Activated naive CD4-positive, alpha-beta T cell treated with anti-CD3 and anti-CD28 coated beads, Interleukin-2, amount 10 ng/mL, durations not matched to agents 7 days and 5 days (primary cell): ENCODE measurements at regions of chr14 and their contacts with region 1.

Region 1: GRCh38 chr14:100285021-100285912 is 21.0 kb downstream of the SLC25A29 start:
- DNase-seq: peak; percentile 82
- H3K4me3 Mint-ChIP-seq: peak overlapping the region; percentile 80
- H3K27ac Mint-ChIP-seq: no peak overlapping the region
- H3K4me1 Mint-ChIP-seq: peaks cover 12% of the 10 kb centered on the region
- H3K27me3 Mint-ChIP-seq: no peaks in the 10 kb centered on the region

Region 2: GRCh38 chr14:100239840-100240724 is 45.2 kb before region 1 on chr14:
- CTCF ChIA-PET with region 1: interaction called, 21 read pairs
- DNase-seq: peak; percentile 87
- H3K4me3 Mint-ChIP-seq: peak overlapping the region; percentile 92
- H3K27ac Mint-ChIP-seq: peak overlapping the region; percentile 93
- H3K4me1 Mint-ChIP-seq: peaks cover 61% of the 10 kb centered on the region
- H3K27me3 Mint-ChIP-seq: peaks cover 4% of the 10 kb centered on the region